HEK293T (cell line): ENCODE measurements at regions of chr10 and their contacts with region 1.

Region 1: GRCh38 chr10:101042667-101043355 is 11.8 kb downstream of the SFXN3 start:
- DNase-seq: peak; percentile 95

Region 2: GRCh38 chr10:101018600-101019439 is 24.0 kb before region 1 on chr10:
- CTCF ChIA-PET with region 1: interaction called, 12 read pairs
- POLR2A ChIA-PET with region 1: interaction called, 8 read pairs
- DNase-seq: peak; percentile 94

Region 3: GRCh38 chr10:101031128-101031795 is 11.5 kb before region 1 on chr10 and contains the starts of genes PDZD7 and SFXN3:
- CTCF ChIA-PET with region 1: interaction called, 24 read pairs
- POLR2A ChIA-PET with region 1: interaction called, 30 read pairs
- DNase-seq: peak; percentile 100

Region 4: GRCh38 chr10:101060036-101060950 is 17.5 kb after region 1 on chr10:
- CTCF ChIA-PET with region 1: interaction called, 63 read pairs
- POLR2A ChIA-PET with region 1: interaction called, 61 read pairs
- DNase-seq: peak; percentile 88

Region 5: DNA sequence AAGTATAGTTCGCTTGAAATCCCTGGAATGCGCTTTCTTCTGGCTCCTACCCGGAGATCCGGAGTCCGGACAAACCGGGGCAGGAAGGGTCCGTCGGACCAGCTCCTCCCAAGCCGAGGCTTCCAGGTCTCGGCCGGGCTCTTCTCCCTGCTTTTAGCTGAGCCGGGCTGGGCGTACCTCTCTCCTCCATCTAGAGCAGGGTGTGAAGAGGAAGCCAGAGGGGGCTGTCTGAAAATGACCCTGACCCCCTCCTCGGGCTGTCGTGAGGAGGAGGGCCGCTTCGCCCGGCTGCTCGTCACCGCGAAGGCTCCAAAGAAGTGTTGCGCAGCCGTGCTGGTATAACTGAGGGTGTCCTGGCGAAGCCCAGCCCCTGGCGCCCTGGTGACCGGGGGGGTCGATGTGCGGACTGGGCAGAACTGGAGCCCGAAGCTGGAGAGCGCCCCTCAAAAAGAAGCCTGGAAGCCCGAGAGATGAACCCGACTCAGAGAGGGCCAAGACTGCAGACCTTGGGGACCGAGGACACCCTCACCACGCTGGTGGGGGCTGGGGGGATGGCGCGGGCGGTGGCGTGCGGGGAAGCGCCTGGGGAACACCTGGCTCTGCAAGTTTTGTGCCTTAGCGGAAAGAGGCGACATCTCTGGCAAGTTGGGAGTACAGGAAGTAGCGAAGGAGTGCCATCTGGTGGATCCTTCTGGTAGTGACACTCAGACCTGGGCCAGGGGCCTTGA is 24.7 kb after region 1 on chr10:
- CTCF ChIA-PET with region 1: interaction called, 30 read pairs
- POLR2A ChIA-PET with region 1: interaction called, 61 read pairs
- DNase-seq: peak; percentile 88

Region 6: DNA sequence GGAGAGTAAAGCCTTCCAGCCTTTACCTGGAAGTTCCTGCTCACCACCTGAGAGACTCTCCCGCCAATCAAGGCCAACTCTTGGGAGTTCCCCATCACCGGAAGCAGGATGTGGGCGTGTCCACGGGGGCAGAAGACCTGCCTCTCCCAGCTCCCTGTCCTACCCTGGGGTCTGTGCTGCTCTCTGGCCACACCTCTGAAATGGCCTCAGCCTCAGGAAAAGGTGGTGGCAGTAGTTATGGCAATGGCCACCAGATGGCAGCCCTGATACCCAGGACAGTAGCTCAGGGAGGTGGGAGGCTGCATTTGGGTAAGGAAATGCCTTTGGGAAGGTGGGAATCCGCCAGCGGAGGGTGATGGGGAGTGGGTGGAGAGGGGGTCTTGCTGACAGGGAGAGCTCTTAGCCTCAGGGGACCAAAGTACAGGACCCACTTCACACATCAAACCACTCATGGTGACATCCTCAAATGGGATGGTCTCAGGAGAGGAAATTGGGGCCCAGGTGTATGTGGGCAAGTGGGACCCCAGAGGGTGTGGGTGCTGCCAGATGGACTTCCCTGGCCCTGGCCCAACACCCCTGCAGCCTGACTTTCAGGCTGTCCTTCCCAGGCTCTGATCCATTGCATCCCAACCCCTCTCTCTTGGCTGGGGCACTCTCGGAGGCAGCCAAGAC is 52.9 kb after region 1 on chr10:
- CTCF ChIA-PET with region 1: interaction called, 14 read pairs
- POLR2A ChIA-PET with region 1: interaction called, 5 read pairs
- DNase-seq: peak; percentile 94

Region 7: GRCh38 chr10:101141616-101142532 is 99.1 kb after region 1 on chr10:
- CTCF ChIA-PET with region 1: interaction called, 8 read pairs
- POLR2A ChIA-PET with region 1: interaction called, 12 read pairs
- DNase-seq: peak; percentile 96